Activated CD8-positive, alpha-beta T cell treated with anti-CD3 and anti-CD28 coated beads for 36 hours (primary cell): ENCODE measurements at regions of chr16 and their contacts with region 1.

Region 1: DNA sequence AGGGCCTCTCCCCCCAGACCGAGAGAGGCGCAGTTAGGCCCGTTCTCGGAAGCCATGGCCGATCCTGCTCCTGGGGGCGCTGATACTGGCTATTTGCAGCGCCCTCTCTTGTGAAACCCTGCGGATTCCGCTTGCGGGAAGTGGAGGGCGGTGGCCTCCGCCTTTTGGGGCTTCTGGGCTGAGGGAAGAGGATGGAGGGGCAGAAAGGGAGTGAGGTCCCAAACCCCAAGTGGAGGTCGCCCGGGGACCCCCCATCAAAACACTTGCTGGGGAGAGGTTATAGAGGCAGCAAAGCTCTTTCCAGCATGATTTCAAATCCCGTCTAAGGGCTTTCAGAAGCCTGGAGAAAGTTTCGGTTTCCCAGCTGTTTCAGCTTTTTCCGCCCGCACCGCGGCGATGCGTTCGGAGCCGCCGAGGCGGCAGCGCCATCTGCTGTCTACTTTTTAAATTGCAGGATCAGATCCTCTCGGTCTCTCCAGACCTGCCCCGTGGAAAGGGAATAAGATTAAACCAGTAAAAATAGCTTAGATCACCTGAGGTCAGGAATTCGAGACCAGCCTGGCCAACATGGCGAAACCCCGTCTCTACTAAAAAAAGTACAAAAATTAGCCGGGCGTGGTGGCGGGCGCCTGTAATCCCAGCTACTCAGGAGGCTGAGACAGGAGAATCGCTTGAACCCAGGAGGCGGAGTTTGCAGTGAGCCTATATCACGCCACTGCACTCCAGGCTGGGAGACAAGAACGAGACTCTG is 15.8 kb downstream of the SNX20 start:
- DNase-seq: peak; percentile 82
- ATAC-seq: peak; percentile 48
- H3K4me3 Mint-ChIP-seq: peak overlapping the region; percentile 54
- H3K27ac Mint-ChIP-seq: peak overlapping the region; percentile 58
- H3K4me1 Mint-ChIP-seq: peaks cover 31% of the 10 kb centered on the region
- H3K27me3 Mint-ChIP-seq: no peaks in the 10 kb centered on the region
- CTCF ChIP-seq: peak; percentile 96

Region 2: GRCh38 chr16:50360033-50360778 is 305.1 kb before region 1 on chr16:
- CTCF ChIA-PET with region 1: interaction called, 24 read pairs
- POLR2A ChIA-PET with region 1: interaction called, 3 read pairs
- intact Hi-C with region 1: loop called (anchors 10 kb)
- DNase-seq: no peak
- ATAC-seq: no peak
- H3K4me3 Mint-ChIP-seq: no peak overlapping the region
- H3K27ac Mint-ChIP-seq: peak overlapping the region; percentile 59
- H3K4me1 Mint-ChIP-seq: peaks cover 45% of the 10 kb centered on the region
- H3K27me3 Mint-ChIP-seq: no peaks in the 10 kb centered on the region
- CTCF ChIP-seq: no peak

Region 3: GRCh38 chr16:50425648-50426047 is 239.7 kb before region 1 on chr16:
- CTCF ChIA-PET with region 1: no interaction called
- POLR2A ChIA-PET with region 1: no interaction called
- intact Hi-C with region 1: no loop called
- DNase-seq: no peak
- ATAC-seq: no peak
- H3K4me3 Mint-ChIP-seq: no peak overlapping the region
- H3K27ac Mint-ChIP-seq: no peak overlapping the region
- H3K4me1 Mint-ChIP-seq: no peaks in the 10 kb centered on the region
- H3K27me3 Mint-ChIP-seq: peaks cover 1% of the 10 kb centered on the region
- CTCF ChIP-seq: no peak

Region 4: DNA sequence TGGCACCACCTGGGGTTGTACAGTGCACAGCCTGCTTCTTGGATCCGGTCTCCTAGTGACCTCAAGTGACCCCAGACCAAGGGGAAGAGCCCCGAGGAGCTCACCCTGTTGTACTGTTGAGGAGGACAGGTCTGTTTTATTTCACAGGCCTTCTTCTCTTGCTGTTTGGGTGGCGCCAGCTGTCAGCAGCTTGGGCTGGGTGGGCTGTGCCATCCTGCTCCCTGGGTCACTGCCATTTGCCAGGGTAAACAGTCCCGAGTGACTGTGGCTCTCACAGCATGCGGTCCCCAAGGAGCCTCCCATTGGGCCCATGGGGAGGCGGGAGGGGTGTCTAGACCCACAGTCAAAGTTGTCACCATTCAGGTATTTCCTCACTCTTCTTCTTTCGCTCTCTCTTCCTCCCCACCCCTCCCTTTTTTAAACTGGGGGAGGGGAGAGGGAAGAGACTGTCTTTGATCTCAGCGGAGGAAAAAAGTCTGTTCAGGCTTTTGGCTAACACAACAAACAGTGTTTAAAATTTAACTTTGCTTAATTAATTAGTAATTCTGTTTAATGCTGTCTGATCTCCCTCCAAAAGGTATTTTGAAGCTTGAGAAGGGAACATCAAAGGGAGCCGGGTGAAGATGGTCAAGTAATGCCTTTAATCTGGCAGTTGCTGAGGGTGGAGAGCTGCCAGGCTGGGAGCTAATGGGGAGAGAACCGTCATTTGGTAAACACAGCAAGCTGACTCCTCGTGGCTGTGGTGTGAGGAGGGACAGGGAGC is 48.2 kb before region 1 on chr16:
- CTCF ChIA-PET with region 1: interaction called, 13 read pairs
- POLR2A ChIA-PET with region 1: interaction called, 3 read pairs
- intact Hi-C with region 1: no loop called
- DNase-seq: no peak
- ATAC-seq: no peak
- H3K4me3 Mint-ChIP-seq: no peak overlapping the region
- H3K27ac Mint-ChIP-seq: no peak overlapping the region
- H3K4me1 Mint-ChIP-seq: peaks cover 6% of the 10 kb centered on the region
- H3K27me3 Mint-ChIP-seq: no peaks in the 10 kb centered on the region
- CTCF ChIP-seq: no peak

Region 5: DNA sequence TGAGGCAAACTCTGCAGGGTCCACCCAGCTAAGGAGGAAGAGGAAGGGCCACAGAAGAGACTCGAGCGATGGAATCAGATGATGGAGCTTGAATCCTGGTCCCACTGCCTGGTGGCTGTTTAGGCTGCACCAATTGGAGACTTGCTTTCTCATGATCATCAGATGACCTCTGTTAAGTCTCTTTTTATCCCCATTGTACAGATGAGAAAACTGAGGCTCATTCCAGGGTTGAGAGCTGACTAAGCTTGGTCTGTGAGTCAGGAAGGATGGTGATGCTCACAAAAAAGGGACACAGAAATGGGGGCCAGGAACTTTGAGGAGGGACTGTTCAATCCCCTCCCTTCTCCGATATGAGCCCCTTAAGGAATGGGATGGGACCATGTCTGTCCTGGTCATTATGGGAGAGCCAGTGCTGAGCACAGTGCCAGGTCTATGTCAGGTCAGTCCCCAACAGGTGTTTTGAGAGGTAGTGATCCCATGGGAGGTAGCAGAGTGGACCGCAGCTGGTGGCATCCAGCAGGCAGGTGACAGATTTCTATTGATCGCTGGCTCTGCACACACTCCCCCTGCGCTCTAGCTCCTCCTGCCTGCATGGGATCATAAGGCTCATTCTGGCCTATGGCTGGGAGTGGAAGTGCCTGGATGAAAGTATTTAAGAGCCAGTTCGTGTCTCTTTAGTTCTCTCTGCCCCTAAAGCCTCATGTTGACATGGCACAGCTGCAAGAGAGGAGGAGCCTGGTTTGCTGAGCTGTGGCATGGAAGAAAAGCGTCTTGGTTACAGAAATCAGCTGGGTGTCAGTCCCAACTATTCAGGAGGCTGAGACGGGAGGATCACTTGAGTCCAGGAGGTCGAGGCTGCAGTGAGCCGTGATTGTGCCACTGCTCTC is 11.4 kb before region 1 on chr16:
- CTCF ChIA-PET with region 1: interaction called, 48 read pairs
- POLR2A ChIA-PET with region 1: interaction called, 4 read pairs
- intact Hi-C with region 1: no loop called
- DNase-seq: no peak
- ATAC-seq: no peak
- H3K4me3 Mint-ChIP-seq: no peak overlapping the region
- H3K27ac Mint-ChIP-seq: no peak overlapping the region
- H3K4me1 Mint-ChIP-seq: no peaks in the 10 kb centered on the region
- H3K27me3 Mint-ChIP-seq: no peaks in the 10 kb centered on the region
- CTCF ChIP-seq: no peak

Region 6: DNA sequence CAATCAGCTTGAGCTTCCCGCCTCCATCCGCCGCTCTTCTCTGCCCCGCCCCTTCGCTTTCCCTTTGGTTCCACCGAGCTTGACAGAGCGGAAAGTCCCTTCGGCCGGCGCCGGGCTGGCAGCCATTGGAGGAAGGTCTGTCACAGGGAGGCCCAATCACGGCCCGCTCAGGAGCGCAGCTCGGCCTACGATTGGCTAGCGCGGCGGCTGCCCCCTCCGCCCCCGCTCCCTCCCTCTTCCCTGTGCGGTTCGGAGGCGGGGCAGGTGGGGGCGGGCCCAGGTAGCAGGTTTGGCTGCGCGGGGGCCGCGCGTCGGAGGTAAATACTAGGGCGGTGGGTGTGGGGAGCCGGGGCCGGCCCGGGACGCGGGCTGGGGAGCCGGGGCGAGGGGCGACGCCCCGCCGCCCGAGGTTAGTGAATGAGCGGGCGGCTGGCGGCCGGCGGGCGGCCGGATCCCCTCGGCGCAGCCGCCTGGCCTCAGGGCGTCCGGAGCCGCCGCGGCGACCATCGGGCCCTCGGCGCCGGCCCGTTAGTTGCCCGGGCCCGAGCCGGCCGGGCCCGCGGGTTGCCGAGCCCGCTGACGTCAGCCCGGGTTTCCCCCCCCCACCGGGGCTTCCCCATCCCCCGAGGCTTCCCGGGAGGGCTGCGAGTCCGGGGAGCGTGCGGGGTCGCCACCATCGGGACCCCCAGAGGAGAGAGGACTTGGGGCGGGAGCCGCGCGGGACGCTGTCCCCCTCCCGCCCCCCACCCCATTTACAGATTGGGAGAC is 76.7 kb after region 1 on chr16 and contains the start of gene CYLD:
- CTCF ChIA-PET with region 1: interaction called, 340 read pairs
- POLR2A ChIA-PET with region 1: interaction called, 5 read pairs
- intact Hi-C with region 1: loop called (anchors 5 kb)
- DNase-seq: peak; percentile 100
- ATAC-seq: peak; percentile 91
- H3K4me3 Mint-ChIP-seq: peak within 1 kb of the TSS; percentile 93
- H3K27ac Mint-ChIP-seq: peak within 1 kb of the TSS; percentile 97
- H3K4me1 Mint-ChIP-seq: peaks cover 38% of the 10 kb centered on the region
- H3K27me3 Mint-ChIP-seq: no peaks in the 10 kb centered on the region
- CTCF ChIP-seq: no peak
- total RNA-seq, gene CYLD: 86.4 to 94.4 TPM

Region 7: DNA sequence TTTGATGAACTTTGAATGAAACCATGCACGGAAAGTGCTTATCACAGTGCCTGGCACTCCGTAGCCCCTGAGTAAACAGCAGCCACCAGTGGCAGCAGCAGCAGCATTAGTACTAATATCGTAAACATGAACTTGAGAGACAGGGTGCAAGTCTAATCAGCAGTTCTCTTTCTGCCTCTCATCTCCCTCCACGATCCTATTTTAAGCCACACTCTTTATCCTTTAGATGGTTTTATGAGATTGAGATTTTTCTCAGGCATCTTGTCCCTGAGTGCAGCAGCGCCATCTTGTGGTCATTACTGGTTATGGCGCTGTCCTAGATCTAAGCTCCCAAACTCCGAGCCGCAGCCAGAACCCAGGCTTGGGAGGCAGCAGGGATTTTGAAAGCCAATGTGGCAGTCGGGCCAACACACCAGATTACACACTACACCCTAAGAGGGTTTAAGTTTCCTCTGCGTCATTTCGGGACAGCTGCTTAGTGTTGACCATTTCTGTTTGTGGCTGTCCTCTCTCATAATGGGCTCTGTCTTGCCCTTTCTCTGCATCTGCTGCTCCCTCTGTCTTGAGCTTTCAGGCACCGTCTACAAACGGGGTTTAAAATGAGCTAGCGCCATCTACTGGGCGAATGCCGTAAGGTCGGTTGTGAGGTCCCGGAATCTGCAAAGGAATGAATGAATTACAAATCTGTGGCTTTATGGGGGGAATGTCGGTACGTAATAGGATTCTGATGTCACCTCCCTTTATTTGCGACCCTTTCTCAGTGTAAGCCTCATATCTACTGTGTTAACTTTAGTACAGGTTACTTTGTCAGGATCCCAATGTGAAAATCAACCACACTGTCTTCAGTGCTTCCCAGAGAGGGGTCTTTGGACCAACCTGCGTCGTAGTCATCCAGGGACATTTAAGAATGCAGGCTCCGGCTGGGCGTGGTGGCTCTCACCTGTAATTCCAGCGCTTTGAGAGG is 141.1 kb after region 1 on chr16:
- CTCF ChIA-PET with region 1: interaction called, 275 read pairs
- POLR2A ChIA-PET with region 1: no interaction called
- intact Hi-C with region 1: loop called (anchors 1 kb)
- DNase-seq: peak; percentile 91
- ATAC-seq: peak; percentile 92
- H3K4me3 Mint-ChIP-seq: peak overlapping the region; percentile 66
- H3K27ac Mint-ChIP-seq: peak overlapping the region; percentile 70
- H3K4me1 Mint-ChIP-seq: peaks cover 13% of the 10 kb centered on the region
- H3K27me3 Mint-ChIP-seq: no peaks in the 10 kb centered on the region
- CTCF ChIP-seq: peak; percentile 98